Left colon (tissue), 2 donors: ENCODE measurements at regions of chr13 and their contacts with region 1.

Region 1: DNA sequence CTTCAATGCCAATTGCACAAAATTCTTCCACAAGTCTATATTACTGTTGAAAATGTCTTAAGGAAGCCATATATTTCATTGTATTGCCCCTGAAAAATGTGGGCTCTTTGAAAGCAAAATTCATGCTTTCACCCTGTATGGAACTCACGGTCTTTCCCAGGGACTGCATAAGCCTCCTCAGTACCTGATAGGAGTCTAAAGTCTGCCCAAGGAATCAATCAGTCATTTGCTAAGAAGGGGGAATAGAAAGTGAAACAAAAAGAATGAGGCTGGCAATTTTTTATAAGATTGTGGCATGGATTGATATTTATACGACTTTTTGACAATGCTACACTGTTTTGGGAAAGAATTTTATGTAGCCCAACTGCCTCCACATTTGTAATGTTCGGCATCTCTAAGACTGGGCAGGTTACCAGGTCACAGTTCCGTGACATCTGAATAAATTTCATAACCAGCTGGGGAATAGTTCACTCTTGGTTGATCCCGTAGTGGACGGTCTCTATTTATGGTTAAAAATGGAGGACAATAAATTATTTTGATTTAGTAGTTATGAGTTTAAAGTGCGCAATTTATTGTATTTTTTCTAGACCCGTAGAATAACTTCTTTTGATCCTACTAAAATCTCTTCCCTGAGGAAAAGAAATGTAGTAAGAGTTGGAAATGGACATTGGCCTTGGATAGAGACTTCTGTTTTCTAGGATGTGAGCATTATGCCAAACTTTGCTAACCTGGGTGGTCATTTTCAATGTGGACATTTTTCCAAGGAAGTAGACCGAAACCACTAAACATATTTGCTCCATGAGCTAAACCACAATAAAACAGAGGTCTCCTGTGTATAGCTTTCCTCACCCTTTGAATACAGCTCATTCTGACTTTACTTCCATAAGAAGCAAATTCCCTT is 1585.4 kb downstream of the EFNB2 start:
- DNase-seq: no peak
- ATAC-seq: no peak

Region 2: DNA sequence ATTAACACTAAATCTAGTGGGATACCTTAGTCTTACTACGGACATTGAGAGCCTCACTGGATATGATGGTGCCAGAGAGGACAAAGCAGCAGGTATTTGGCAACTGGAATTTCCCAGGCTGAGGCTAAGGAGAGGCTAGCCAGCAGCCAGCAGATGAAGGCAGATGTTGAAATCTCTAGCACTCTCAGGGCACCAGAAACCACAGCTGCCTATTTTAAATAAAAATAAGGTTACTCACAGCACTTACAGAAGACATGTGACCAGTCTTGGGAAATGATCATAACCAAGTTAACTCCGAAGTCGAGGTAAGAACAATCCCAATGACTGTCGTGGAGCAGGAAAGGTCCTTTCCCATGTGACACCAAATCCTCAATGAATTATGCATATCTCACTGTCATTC is 140.6 kb before region 1 on chr13:
- intact Hi-C with region 1: no loop called
- DNase-seq: no peak
- ATAC-seq: no peak

Region 3: DNA sequence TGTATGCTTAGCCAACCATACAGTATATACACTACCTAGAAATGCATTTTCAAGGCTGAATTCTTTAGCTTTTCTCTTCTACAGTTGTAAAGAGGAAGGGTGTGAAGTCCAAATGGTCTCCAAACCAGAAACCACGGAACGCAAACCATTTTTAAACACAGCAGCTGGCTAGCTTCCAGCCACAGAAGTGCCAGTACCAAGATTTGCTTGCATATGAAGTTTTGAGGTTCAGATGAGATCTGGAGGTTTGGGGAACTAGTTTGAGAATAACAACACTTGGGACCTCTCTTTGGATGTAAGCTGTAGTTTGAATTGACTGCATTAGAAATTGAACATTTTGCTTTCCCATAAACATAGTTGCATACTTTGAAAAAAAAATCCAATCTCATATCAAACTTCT is 341.9 kb after region 1 on chr13:
- intact Hi-C with region 1: loop called in 1 of 2 experiments (anchors 5 kb)
- DNase-seq: no peak
- ATAC-seq: no peak